Head of caudate nucleus (tissue), 42 donors: ENCODE measurements at regions of chr6 and their contacts with region 1.

Region 1: DNA sequence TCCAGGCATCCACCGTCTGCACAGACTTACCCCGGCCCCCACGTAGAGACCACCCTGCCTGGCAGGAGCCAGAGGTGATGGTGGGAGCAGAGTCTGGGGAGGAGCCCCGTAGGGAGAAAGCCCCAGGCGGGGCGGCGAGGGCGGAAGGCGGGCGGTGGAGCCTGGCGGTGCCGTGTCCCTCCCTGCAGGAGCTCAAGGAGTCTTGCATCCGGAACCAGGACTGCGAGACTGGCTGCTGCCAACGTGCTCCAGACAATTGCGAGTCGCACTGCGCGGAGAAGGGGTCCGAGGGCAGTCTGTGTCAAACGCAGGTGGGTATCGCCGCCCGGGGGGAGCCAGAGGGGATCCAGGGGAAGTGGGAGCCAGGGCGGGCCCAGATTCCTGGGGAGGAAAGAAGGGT is 6.0 kb downstream of the CLPSL1 start:
- DNase-seq: no peak

Region 2: DNA sequence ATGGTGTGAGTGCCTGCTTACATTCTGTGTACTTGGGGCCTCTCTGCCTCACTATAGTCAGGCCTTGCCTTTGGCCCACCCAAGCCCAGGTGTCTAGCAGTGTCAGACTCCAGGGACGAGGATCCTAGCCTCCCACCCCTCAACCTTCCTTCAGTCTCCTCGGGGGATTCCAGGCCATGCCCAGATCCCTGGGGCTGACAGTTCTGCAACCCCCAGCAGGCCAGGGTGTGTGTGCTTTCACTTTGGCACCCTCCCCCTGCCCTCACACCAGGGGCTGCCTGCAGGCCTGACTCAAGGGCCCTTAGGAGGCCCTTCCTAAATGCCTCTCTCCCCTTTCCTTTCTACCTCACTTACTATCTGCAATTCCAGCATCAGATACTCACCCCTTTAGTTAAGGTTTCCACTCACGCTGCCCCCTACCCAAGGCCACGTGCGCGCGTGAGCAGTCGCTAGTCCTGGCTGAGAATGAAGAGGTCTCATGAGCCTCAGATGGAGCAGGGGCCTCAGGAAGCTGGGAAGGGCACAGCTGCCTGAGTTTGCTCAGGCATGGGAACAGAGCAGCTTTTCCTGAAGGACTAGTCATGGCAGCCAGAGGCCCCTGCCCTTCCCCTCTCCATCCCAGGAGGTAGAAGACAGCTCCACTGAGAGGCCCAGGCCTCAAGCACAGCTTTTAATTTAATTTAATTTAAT is 11.2 kb after region 1 on chr6:
- intact Hi-C with region 1: loop called (anchors 1 kb)
- DNase-seq: no peak

Region 3: DNA sequence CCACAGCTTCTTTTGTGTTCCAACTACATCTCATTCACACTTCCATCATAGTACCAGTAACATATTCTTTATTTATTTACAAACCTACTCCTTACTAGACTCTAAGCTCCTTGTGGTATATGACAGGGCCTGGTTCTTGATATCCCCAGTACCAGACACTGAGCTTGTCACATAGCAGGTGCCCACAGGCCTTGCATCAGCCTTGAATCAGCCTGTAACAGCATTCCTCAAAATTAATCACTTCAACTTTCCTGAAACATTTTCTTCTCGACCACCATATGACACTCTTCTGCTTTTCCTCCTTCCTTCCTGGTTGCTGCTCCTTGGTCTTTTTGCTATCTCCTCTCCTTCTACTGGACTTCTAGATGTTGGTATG is 158.8 kb after region 1 on chr6:
- intact Hi-C with region 1: no loop called
- DNase-seq: no peak